Activated B cell treated with CpG ODN at 0.5 μM for 24 hours (primary cell): ENCODE measurements at regions of chr16 and their contacts with region 1.

Region 1: DNA sequence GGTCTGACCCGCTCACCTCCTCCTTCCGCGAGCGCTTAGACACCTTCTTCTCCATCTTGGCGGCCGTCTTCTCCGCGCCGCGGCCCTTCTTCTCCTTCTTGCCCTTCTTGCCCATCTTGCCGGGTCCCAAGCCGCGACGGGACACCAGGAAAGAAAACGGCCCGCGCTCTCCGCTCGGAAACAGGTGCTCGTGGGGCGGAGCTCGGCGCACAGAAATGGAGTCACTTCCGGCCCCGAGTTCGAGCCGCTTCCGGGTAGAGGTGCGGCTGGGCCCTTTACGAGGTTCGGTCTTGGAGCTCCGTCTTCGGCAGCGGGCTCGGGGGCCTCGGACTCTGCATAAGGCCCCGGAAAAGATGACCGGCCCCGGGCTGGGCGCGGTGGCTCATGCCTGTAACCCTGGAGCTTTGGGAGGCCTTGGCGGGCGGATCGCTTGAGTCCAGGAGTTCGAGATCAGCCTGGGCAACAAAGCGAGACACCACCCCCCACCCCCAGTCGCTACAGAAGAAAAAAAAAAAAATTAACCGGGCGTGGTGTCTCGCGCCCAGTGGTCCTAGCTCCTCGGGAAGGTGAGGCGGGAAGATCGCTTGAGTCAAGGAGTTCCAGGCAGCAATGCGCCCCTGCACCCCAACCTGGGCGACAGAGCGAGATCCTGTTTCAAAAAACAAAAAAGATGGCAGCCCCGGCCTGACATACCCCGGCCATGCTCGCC is at the start of gene KLHDC4:
- DNase-seq: peak; percentile 87
- ATAC-seq: peak; percentile 84
- H3K4me3 Mint-ChIP-seq: peak within 1 kb of the TSS; percentile 100
- H3K27ac Mint-ChIP-seq: peak within 1 kb of the TSS; percentile 98
- H3K4me1 Mint-ChIP-seq: peaks cover 31% of the 10 kb centered on the region
- H3K27me3 Mint-ChIP-seq: no peaks in the 10 kb centered on the region
- CTCF ChIP-seq: no peak
- total RNA-seq, gene KLHDC4: 70.1 and 87.0 TPM in 2 replicates

Region 2: DNA sequence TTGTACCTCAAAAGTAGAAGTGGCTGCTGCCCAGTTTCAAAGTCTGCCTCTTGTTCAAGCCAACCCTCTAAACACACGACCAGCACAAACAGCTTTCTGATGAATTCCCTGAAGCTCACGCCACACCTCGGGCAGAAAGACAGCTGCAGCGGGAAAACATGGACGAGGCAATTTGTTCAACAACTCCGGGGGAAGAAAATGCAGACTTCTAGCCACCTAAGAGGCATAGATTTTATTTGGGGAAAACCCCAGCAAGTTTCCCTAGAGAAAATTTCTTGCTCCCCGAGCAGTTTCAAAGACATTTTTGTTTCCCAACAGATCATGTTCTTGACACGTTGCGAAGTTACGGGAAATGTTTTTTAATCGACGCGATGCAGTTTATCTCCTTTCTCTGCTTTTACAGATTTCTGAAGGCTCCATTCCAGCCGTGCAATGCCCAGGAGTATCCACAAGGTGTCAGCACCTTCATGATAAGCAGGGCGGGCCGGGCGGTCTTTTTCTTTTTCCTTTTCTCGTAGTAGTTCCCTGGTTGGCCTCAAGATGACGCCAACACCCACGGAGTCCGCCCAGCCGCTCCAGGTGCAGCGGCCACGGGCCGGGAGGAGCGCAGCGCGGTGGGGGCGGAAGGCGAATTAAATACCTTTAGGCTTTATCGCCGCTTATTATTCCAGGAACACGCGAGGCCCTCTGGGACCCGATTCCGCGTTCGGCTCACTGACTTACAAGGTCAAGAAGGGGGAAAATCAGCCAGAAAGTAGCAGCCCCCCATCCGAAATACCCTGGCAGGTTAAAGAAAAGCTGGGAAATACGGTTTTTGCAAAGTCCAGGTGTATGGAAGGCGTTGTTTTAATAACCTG is 1202.2 kb before region 1 on chr16:
- CTCF ChIA-PET with region 1: no interaction called
- POLR2A ChIA-PET with region 1: no interaction called
- intact Hi-C with region 1: loop called (anchors 2 kb)
- DNase-seq: peak; percentile 72
- ATAC-seq: peak; percentile 99
- H3K4me3 Mint-ChIP-seq: peak overlapping the region; percentile 64
- H3K27ac Mint-ChIP-seq: no peak overlapping the region
- H3K4me1 Mint-ChIP-seq: peaks cover 25% of the 10 kb centered on the region
- H3K27me3 Mint-ChIP-seq: peaks cover 32% of the 10 kb centered on the region
- CTCF ChIP-seq: peak; percentile 95

Region 3: GRCh38 chr16:87387942-87388817 is 377.8 kb before region 1 on chr16:
- CTCF ChIA-PET with region 1: no interaction called
- POLR2A ChIA-PET with region 1: interaction called, 3 read pairs
- intact Hi-C with region 1: loop called (anchors 5 kb)
- DNase-seq: peak; percentile 59
- ATAC-seq: peak; percentile 62
- H3K4me3 Mint-ChIP-seq: peak overlapping the region; percentile 70
- H3K27ac Mint-ChIP-seq: peak overlapping the region; percentile 98
- H3K4me1 Mint-ChIP-seq: peaks cover 52% of the 10 kb centered on the region
- H3K27me3 Mint-ChIP-seq: peaks cover 2% of the 10 kb centered on the region
- CTCF ChIP-seq: no peak

Region 4: GRCh38 chr16:87550496-87550961 is 215.4 kb before region 1 on chr16:
- CTCF ChIA-PET with region 1: interaction called, 5 read pairs
- POLR2A ChIA-PET with region 1: no interaction called
- intact Hi-C with region 1: loop called (anchors 1 kb)
- DNase-seq: peak; percentile 56
- ATAC-seq: no peak
- H3K4me3 Mint-ChIP-seq: no peak overlapping the region
- H3K27ac Mint-ChIP-seq: no peak overlapping the region
- H3K4me1 Mint-ChIP-seq: no peaks in the 10 kb centered on the region
- H3K27me3 Mint-ChIP-seq: peaks cover 23% of the 10 kb centered on the region
- CTCF ChIP-seq: peak; percentile 20

Region 5: DNA sequence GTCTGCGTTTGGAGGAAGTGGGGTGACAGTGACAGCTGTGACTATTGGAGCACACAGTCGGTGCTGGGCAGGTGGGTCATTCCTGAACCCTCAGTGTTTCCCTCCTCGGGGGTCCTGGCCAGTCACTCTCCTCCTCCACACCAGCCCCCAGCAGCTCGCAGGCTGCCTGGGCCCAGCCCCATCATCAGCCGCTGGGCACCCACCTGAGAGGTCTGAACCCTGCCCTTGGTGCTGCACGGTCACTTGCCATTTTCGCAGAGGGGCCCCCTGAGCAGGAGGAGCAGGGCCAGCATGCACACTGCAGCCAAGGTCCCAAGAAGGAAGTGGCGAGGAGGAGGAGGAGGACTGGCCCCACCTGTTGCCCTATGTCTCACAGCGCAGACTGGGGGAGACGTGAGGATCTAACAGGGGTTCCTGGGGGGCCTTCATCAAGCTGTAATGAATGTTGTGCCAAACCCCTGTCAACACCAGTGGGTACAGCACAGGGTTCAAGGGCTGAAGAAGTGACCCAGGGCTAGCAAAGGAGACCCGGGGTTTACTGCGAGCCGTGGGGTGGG is 140.6 kb before region 1 on chr16:
- CTCF ChIA-PET with region 1: no interaction called
- POLR2A ChIA-PET with region 1: no interaction called
- intact Hi-C with region 1: no loop called
- DNase-seq: no peak
- ATAC-seq: no peak
- H3K4me3 Mint-ChIP-seq: no peak overlapping the region
- H3K27ac Mint-ChIP-seq: no peak overlapping the region
- H3K4me1 Mint-ChIP-seq: peaks cover 1% of the 10 kb centered on the region
- H3K27me3 Mint-ChIP-seq: peaks cover 14% of the 10 kb centered on the region
- CTCF ChIP-seq: no peak

Region 6: GRCh38 chr16:87636072-87636684 is 129.8 kb before region 1 on chr16:
- CTCF ChIA-PET with region 1: interaction called, 11 read pairs
- POLR2A ChIA-PET with region 1: interaction called, 3 read pairs
- intact Hi-C with region 1: loop called (anchors 1 kb)
- DNase-seq: peak; percentile 69
- ATAC-seq: peak; percentile 90
- H3K4me3 Mint-ChIP-seq: peak overlapping the region; percentile 84
- H3K27ac Mint-ChIP-seq: peak overlapping the region; percentile 69
- H3K4me1 Mint-ChIP-seq: peaks cover 24% of the 10 kb centered on the region
- H3K27me3 Mint-ChIP-seq: peaks cover 19% of the 10 kb centered on the region
- CTCF ChIP-seq: peak; percentile 4

Region 7: GRCh38 chr16:87725596-87726235 is 40.2 kb before region 1 on chr16:
- CTCF ChIA-PET with region 1: no interaction called
- POLR2A ChIA-PET with region 1: interaction called, 9 read pairs
- intact Hi-C with region 1: loop called (anchors 1 kb)
- DNase-seq: no peak
- ATAC-seq: no peak
- H3K4me3 Mint-ChIP-seq: no peak overlapping the region
- H3K27ac Mint-ChIP-seq: peak overlapping the region; percentile 74
- H3K4me1 Mint-ChIP-seq: peaks cover 31% of the 10 kb centered on the region
- H3K27me3 Mint-ChIP-seq: no peaks in the 10 kb centered on the region
- CTCF ChIP-seq: no peak

Region 8: DNA sequence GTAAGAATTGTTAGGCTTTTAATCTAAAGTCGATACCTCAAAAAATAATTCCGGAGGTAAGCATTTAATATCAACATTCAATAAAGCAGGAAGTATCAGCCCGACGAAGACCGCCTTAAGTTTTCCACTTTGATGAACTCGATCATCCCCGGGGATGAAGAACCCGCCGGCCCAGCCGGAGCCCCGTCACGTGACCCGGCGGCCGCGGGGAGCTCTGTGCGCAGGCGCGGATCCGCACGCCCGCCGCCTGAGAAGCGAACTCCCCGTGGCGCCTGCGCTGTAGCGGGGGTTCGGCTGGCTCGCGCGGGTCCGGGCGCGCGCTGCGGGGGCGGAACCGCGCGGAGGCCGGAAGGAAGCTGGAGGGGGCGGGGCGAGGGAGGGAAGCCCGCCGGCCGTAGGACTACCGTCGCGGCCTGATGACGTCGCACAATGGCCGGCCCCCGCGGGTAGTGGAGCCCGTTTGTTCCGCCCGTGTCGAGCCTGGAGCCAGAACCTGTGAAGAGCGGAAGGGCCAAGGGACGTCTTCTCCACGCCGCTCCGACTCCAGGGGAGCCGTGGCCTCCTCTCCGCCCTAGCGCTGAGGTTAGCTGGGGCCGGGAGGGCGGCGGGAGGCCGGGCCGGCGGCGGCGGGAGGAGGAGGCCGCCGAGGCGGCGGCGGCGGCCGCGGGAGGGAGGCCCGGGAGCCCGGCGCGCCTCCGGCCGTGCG is 804.2 kb after region 1 on chr16 and contains the start of gene ZC3H18:
- CTCF ChIA-PET with region 1: no interaction called
- POLR2A ChIA-PET with region 1: interaction called, 7 read pairs
- intact Hi-C with region 1: loop called (anchors 5 kb)
- DNase-seq: peak; percentile 99
- ATAC-seq: peak; percentile 92
- H3K4me3 Mint-ChIP-seq: peak within 1 kb of the TSS; percentile 86
- H3K27ac Mint-ChIP-seq: peak within 1 kb of the TSS; percentile 76
- H3K4me1 Mint-ChIP-seq: peaks cover 25% of the 10 kb centered on the region
- H3K27me3 Mint-ChIP-seq: no peaks in the 10 kb centered on the region
- CTCF ChIP-seq: no peak
- total RNA-seq, gene ZC3H18: 61.7 and 74.2 TPM in 2 replicates